ENCODE measurements at regions of chr1 and their contacts with region 1.

Region 1: GRCh38 chr1:52225174-52225573 is 83.3 kb downstream of the ZFYVE9 start:
- DNase-seq: no peak
- ATAC-seq: no peak
- H3K4me3 ChIP-seq: no peak overlapping the region
- H3K27ac ChIP-seq: no peak overlapping the region
- H3K4me1 ChIP-seq: no peaks in the 10 kb centered on the region
- H3K27me3 ChIP-seq: peaks cover 0 to 95% (median 0%) of the 10 kb centered on the region in 7 donors
- CTCF ChIP-seq: no peak

Region 2: DNA sequence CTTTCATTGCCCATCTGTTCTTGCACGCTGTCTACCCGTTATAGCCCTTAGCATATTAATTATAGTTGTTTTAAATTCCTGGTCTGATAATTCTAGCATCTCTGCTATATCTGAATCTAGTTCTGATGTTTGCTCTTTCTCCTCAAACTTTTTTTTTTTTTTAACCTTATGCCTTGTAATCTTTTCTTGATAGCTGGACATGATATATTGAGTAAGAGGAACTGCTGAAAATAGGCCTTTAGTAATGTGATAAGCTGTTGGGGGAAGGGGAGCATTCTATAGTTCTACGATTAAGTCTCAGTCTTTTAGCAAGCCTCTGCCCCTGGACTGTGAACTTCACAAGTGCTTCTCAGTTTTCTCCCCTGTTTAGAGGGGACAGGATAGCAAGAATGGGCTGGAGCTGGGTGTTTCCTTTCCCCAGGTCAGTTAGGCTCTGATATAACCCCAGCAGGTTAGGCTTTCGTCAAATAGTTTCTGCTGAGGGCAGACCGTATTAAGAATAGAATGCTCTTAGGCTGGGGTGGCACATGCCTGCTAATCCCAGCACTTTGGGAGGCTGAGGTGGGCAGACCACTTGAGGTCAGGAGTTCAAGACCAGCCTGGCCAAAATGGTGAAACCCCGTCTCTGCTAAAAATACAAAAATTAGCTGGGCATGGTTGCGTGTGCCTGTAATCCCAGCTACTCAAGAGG is 21.1 kb before region 1 on chr1:
- intact Hi-C with region 1: loop called in 1 of 10 experiments (anchors 1 kb)
- DNase-seq: no peak
- ATAC-seq: no peak
- H3K4me3 ChIP-seq: no peak overlapping the region
- H3K27ac ChIP-seq: no peak overlapping the region
- H3K4me1 ChIP-seq: peaks cover 0 to 20% (median 9%) of the 10 kb centered on the region in 9 donors
- H3K27me3 ChIP-seq: peaks cover 0 to 20% (median 0%) of the 10 kb centered on the region in 7 donors
- CTCF ChIP-seq: no peak

Measured in heart right ventricle (tissue), 16 donors.